H1 (cell line): ENCODE measurements at regions of chr2 and their contacts with region 1.

Region 1: DNA sequence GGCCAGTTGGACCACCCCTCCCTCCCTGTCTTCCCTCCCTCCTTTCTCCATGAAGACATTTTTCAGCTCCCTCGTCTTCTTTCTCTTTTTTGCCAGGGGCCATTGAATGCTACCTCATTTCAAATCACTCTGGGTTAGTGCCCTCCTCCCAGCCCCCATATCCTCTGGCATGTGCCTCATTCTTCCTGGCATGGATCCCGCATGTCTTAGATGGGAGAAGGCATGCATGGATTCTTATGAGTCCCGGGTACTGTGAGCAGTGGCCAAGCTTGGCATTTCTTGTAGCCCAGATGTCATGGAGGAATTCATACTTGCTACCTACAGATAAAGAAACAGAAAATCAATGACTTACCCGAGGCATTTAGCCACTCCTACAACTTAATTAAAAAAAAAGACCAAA is 9.0 kb upstream of the HAAO start:
- DNase-seq: no peak
- H3K4me3 ChIP-seq: no peak overlapping the region
- H3K27ac ChIP-seq: no peak overlapping the region
- H3K4me1 ChIP-seq: no peaks in the 10 kb centered on the region
- H3K27me3 ChIP-seq: no peaks in the 10 kb centered on the region
- CTCF ChIP-seq: no peak
- EP300 ChIP-seq: no peak
- POLR2A ChIP-seq: no peak
- RAD21 ChIP-seq: no peak

Region 2: DNA sequence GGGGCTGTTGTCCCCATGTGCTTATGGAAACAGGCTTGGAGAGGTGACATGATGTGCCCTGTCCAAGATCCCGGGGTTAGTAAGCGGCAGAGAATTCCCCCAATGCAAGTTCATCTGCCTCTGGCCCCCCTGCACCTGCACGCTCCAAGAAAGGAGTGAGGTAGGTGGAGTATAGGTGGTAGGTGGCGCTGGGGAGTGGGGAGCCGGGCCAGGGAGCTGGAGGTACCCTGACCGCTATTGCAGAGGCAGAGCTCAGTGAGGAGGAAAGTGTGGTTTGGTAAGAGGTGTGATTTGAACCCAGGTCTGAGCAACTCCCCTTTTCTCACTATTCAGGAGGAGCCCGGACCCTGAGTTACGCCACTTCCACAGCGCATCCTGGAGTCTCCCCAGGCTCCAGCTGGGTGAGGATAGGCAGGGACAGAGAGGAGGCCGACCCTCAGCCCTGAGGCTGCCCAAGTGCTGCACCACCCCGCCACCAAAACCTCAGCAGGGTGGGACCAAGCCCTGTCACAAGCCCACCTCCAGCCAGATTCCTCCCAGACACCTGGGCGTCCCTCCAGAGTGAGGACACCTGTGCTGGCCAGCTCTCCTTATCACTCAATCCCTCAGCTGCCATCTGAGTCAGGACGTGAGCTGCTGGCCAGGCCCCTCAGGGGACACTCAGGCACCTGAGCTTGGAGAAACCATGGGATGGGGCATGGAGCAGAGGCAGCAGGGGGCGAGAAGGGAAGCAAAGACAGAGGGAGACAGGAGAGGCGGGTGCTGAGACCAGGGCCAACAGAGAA is 14.6 kb before region 1 on chr2:
- CTCF ChIA-PET with region 1: interaction called, 11 read pairs
- POLR2A ChIA-PET with region 1: no interaction called
- DNase-seq: peak in 1 of 2 experiments; percentile 52
- H3K4me3 ChIP-seq: no peak overlapping the region
- H3K27ac ChIP-seq: no peak overlapping the region
- H3K4me1 ChIP-seq: peaks cover 0 to 7% (median under 1%) of the 10 kb centered on the region in 4 experiments; a peak in 3 of 7 replicates
- H3K27me3 ChIP-seq: peaks cover 0 to 9% (median 7%) of the 10 kb centered on the region in 4 experiments; a peak in 6 of 7 replicates
- CTCF ChIP-seq: peak; percentile 22 to 43 (median 33); a peak in 3 of 4 replicates
- EP300 ChIP-seq: no peak
- POLR2A ChIP-seq: no peak
- RAD21 ChIP-seq: peak; percentile 34 to 52

Region 3: GRCh38 chr2:43075054-43075593 is 273.7 kb after region 1 on chr2:
- CTCF ChIA-PET with region 1: no interaction called
- POLR2A ChIA-PET with region 1: no interaction called
- DNase-seq: no peak
- H3K4me3 ChIP-seq: no peak overlapping the region
- H3K27ac ChIP-seq: no peak overlapping the region
- H3K4me1 ChIP-seq: peaks cover 0 to 3% (median 0%) of the 10 kb centered on the region in 4 experiments; a peak in 2 of 7 replicates
- H3K27me3 ChIP-seq: no peaks in the 10 kb centered on the region
- CTCF ChIP-seq: no peak
- EP300 ChIP-seq: no peak
- POLR2A ChIP-seq: no peak
- RAD21 ChIP-seq: no peak